PC-3 (cell line): ENCODE measurements at regions of chr21 and their contacts with region 1.

Region 1: DNA sequence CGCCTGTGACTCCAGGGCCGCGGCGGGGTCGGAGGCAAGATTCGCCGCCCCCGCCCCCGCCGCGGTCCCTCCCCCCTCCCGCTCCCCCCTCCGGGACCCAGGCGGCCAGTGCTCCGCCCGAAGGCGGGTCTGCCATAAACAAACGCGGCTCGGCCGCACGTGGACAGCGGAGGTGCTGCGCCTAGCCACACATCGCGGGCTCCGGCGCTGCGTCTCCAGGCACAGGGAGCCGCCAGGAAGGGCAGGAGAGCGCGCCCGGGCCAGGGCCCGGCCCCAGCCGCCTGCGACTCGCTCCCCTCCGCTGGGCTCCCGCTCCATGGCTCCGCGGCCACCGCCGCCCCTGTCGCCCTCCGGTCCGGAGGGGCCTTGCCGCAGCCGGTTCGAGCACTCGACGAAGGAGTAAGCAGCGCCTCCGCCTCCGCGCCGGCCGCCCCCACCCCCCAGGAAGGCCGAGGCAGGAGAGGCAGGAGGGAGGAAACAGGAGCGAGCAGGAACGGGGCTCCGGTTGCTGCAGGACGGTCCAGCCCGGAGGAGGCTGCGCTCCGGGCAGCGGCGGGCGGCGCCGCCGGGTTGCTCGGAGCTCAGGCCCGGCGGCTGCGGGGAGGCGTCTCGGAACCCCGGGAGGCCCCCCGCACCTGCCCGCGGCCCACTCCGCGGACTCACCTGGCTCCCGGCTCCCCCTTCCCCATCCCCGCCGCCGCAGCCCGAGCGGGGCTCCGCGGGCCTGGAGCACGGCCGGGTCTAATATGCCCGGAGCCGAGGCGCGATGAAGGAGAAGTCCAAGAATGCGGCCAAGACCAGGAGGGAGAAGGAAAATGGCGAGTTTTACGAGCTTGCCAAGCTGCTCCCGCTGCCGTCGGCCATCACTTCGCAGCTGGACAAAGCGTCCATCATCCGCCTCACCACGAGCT is at the start of gene SIM2:
- DNase-seq: peak; percentile 92
- ATAC-seq: peak; percentile 65
- H3K4me3 ChIP-seq: peak within 1 kb of the TSS; percentile 95
- H3K27ac ChIP-seq: peak within 1 kb of the TSS; percentile 84
- H3K4me1 ChIP-seq: peaks cover 19% of the 10 kb centered on the region
- H3K27me3 ChIP-seq: no peaks in the 10 kb centered on the region
- CTCF ChIP-seq: no peak
- total RNA-seq, gene SIM2: 71.2 and 104 TPM in 2 replicates

Region 2: GRCh38 chr21:36381841-36382589 is 317.2 kb before region 1 on chr21:
- CTCF ChIA-PET with region 1: no interaction called
- POLR2A ChIA-PET with region 1: no interaction called
- intact Hi-C with region 1: no loop called
- DNase-seq: peak; percentile 59
- ATAC-seq: peak; percentile 5
- H3K4me3 ChIP-seq: no peak overlapping the region
- H3K27ac ChIP-seq: peak overlapping the region; percentile 24; the same call in 1 of the 2 replicates
- H3K4me1 ChIP-seq: peaks cover 15% of the 10 kb centered on the region
- H3K27me3 ChIP-seq: no peaks in the 10 kb centered on the region
- CTCF ChIP-seq: no peak

Region 3: GRCh38 chr21:36589355-36589971 is 109.8 kb before region 1 on chr21:
- CTCF ChIA-PET with region 1: no interaction called
- POLR2A ChIA-PET with region 1: no interaction called
- intact Hi-C with region 1: loop called (anchors 1 kb)
- DNase-seq: peak; percentile 70
- ATAC-seq: no peak; the same call in 1 of the 2 replicates
- H3K4me3 ChIP-seq: no peak overlapping the region
- H3K27ac ChIP-seq: no peak overlapping the region
- H3K4me1 ChIP-seq: peaks cover 18% of the 10 kb centered on the region
- H3K27me3 ChIP-seq: no peaks in the 10 kb centered on the region
- CTCF ChIP-seq: peak; percentile 87

Region 4: GRCh38 chr21:36630485-36631206 is 68.6 kb before region 1 on chr21:
- CTCF ChIA-PET with region 1: no interaction called
- POLR2A ChIA-PET with region 1: no interaction called
- intact Hi-C with region 1: no loop called
- DNase-seq: peak; percentile 80
- ATAC-seq: peak; percentile 49
- H3K4me3 ChIP-seq: no peak overlapping the region
- H3K27ac ChIP-seq: no peak overlapping the region
- H3K4me1 ChIP-seq: peaks cover 16% of the 10 kb centered on the region
- H3K27me3 ChIP-seq: no peaks in the 10 kb centered on the region
- CTCF ChIP-seq: peak; percentile 94

Region 5: GRCh38 chr21:36676039-36676950 is 22.9 kb before region 1 on chr21:
- CTCF ChIA-PET with region 1: no interaction called
- POLR2A ChIA-PET with region 1: no interaction called
- intact Hi-C with region 1: loop called (anchors 1 kb)
- DNase-seq: peak; percentile 92
- ATAC-seq: peak; percentile 83
- H3K4me3 ChIP-seq: peak overlapping the region; percentile 16; the same call in 1 of the 2 replicates
- H3K27ac ChIP-seq: peak overlapping the region; percentile 81
- H3K4me1 ChIP-seq: peaks cover 51% of the 10 kb centered on the region
- H3K27me3 ChIP-seq: no peaks in the 10 kb centered on the region
- CTCF ChIP-seq: no peak